Posterior vena cava (tissue), 2 donors: ENCODE measurements at regions of chr6 and their contacts with region 1.

Region 1: DNA sequence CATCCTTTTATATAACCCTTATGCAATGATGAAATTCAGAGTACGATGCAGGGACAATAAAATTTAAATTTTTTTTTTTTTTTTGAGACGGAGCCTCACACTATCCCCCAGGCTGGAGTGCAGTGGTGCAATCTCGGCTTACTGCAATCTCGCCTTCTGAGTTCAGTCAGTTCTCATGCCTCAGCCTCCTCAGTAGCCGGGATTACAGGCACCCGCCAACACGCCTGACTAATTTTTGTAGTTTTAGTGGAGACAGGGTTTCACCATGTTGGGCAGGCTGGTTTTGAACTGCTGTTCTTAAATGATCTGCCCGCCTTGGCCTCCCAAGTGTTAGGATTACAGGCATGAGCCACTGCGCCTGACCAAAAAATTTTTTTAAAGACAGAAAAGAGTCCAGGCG is 15.2 kb downstream of the MTO1 start:
- DNase-seq: no peak

Region 2: GRCh38 chr6:73548458-73549446 is 72.0 kb after region 1 on chr6:
- intact Hi-C with region 1: loop called in 1 of 2 experiments (anchors 2 kb)
- DNase-seq: no peak